ENCODE measurements at regions of chr6 and their contacts with region 1.

Region 1: DNA sequence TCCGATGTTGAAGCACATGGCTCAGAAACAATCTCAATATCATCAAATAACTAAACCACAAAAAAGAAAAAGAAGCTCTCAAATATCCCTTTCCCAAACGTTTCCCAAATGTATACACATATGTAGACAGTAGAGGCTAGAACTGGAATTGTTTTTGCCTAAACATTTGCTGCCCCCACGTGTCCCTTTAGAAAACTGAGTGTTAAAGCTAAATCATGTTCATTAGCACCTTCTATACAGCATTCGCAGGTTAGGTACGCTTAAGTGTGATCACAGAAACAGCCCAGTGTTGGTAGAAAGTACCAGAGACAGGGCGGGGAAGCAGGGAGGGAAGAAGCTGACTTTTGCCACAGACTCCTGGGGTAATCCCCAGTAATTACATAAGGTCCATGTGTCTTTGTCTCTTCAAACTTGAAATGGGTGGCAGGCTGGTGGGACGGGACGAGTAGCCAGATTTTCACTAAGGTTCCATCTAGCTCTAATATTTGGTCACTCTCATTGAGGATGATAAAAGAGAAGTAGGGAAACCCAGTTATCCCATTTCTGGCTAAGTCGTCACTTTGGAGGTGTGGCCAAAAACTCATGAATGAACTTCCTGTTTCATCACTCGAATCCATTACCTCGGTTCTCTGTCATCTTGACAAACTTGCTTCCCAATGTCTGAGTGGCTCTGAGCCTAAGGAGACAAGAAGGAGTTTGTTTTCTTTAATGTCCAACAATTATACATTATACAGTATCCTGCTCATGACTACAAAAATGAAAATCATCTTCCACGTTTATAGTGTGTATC is 15.0 kb upstream of the TFAP2A start:
- DNase-seq: no peak
- CTCF ChIP-seq: peak; percentile 70

Region 2: GRCh38 chr6:10414766-10415592 is 14.9 kb before region 1 on chr6 and contains the start of gene TFAP2A:
- CTCF ChIA-PET with region 1: interaction called, 12 read pairs
- POLR2A ChIA-PET with region 1: no interaction called
- DNase-seq: no peak
- CTCF ChIP-seq: no peak